ENCODE measurements at regions of chr20 and their contacts with region 1.

Region 1: GRCh38 chr20:59032023-59032712 is at the start of gene ATP5F1E:
- DNase-seq: peak; percentile 91 to 98 (median 96)
- ATAC-seq: peak; percentile 95 to 99 (median 96)
- H3K4me3 ChIP-seq: peak within 1 kb of the TSS; percentile 78 to 88
- H3K4me3 Mint-ChIP-seq: peak within 1 kb of the TSS; percentile 91 to 95 (median 94)
- H3K27ac ChIP-seq: peak within 1 kb of the TSS; percentile 78
- H3K27ac Mint-ChIP-seq: peak within 1 kb of the TSS; percentile 94 to 96
- H3K4me1 ChIP-seq: peaks cover 27 to 37% of the 10 kb centered on the region in 2 experiments
- H3K4me1 Mint-ChIP-seq: peaks cover 54 to 59% (median 56%) of the 10 kb centered on the region in 3 donors
- H3K27me3 ChIP-seq: no peaks in the 10 kb centered on the region
- H3K27me3 Mint-ChIP-seq: no peaks in the 10 kb centered on the region
- total RNA-seq, gene ATP5F1E: 50.6 to 105 (median 62.4) TPM

Region 2: GRCh38 chr20:58980700-58981627 is 51.2 kb before region 1 on chr20 and contains the start of gene NELFCD:
- CTCF ChIA-PET with region 1: interaction called in 1 of 2 experiments, 14 read pairs
- POLR2A ChIA-PET with region 1: no interaction called
- DNase-seq: peak; percentile 67 to 94 (median 83)
- ATAC-seq: peak; percentile 89 to 94 (median 92)
- H3K4me3 ChIP-seq: peak within 1 kb of the TSS; percentile 89 to 90
- H3K4me3 Mint-ChIP-seq: peak within 1 kb of the TSS; percentile 52 to 91 (median 88)
- H3K27ac ChIP-seq: peak within 1 kb of the TSS; percentile 69
- H3K27ac Mint-ChIP-seq: peak within 1 kb of the TSS; percentile 83 to 91
- H3K4me1 ChIP-seq: peaks cover 10 to 40% of the 10 kb centered on the region in 2 experiments
- H3K4me1 Mint-ChIP-seq: peaks cover 38 to 41% (median 41%) of the 10 kb centered on the region in 3 donors
- H3K27me3 ChIP-seq: no peaks in the 10 kb centered on the region
- H3K27me3 Mint-ChIP-seq: no peaks in the 10 kb centered on the region
- total RNA-seq, gene NELFCD: 72.6 to 95.4 (median 90.4) TPM

Region 3: GRCh38 chr20:59042796-59043660 is 10.9 kb after region 1 on chr20:
- CTCF ChIA-PET with region 1: interaction called in 1 of 2 experiments, 12 read pairs
- POLR2A ChIA-PET with region 1: interaction called, 4 to 31 read pairs
- DNase-seq: peak; percentile 86 to 97 (median 91)
- ATAC-seq: peak; percentile 95 to 98 (median 98)
- H3K4me3 ChIP-seq: peak overlapping the region; percentile 68 to 87
- H3K4me3 Mint-ChIP-seq: peak overlapping the region; percentile 69 to 90 (median 86)
- H3K27ac ChIP-seq: peak overlapping the region; percentile 84
- H3K27ac Mint-ChIP-seq: peak overlapping the region; percentile 86 to 88
- H3K4me1 ChIP-seq: peaks cover 27 to 33% of the 10 kb centered on the region in 2 experiments
- H3K4me1 Mint-ChIP-seq: peaks cover 46 to 57% (median 49%) of the 10 kb centered on the region in 3 donors
- H3K27me3 ChIP-seq: no peaks in the 10 kb centered on the region
- H3K27me3 Mint-ChIP-seq: no peaks in the 10 kb centered on the region